T-cell (primary cell): ENCODE measurements at regions of chrX and their contacts with region 1.

Region 1: DNA sequence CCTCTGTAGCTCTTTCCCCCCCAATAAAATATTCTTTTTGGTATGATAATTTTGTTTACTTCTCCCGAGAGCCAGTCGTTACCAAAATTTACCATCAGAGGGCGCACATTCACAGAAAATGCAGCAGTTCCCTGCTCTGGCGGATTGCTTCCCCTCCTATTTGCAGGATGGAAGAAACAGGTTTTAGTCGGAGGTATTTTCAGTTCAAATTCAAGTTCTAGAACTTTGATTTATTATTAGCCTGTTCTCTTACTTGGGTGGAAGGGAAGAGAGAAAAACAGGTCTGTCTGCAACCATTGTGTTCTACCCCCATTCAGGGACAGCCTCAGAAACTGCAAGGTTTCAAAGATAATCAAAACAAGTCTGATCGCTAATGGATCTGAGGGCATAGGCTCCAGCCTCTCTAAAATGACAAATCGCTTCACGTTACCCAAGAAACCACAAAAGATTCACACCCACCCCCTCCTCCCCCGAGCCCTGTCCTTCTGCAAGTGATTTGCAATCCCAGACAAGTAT is 263.8 kb upstream of the RPS6KA3 start:
- DNase-seq: peak; percentile 1 to 68 (median 34)
- ATAC-seq: peak in 3 of 4 experiments; percentile 30 to 55 (median 44)
- H3K4me3 ChIP-seq: no peak overlapping the region
- H3K4me3 Mint-ChIP-seq: no peak overlapping the region
- H3K27ac ChIP-seq: no peak overlapping the region
- H3K27ac Mint-ChIP-seq: no peak overlapping the region
- H3K4me1 ChIP-seq: no peaks in the 10 kb centered on the region
- H3K4me1 Mint-ChIP-seq: peaks cover 5 to 8% (median 5%) of the 10 kb centered on the region in 3 donors
- H3K27me3 ChIP-seq: peaks cover 0 to 4% of the 10 kb centered on the region in 2 experiments
- H3K27me3 Mint-ChIP-seq: peaks cover 16 to 51% of the 10 kb centered on the region in 2 donors

Region 2: DNA sequence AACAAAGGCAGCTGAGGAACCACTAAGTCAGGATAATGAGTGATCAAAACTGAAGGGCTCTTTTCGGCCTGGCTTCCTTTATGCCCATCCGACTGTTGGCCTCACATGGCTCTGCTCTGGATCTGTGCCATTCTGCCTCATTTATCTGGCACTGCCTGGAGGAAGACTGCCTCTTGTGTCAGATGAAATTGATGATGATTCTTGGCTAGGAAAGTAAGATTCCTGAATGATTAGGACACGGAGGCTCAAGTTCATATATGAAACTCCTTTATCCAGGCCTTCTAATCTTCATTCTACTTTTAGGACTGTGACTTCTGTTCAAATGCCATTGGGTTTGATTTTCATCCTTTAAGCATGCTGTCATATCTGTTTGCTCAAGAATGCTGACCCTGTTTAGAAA is 211.6 kb after region 1 on chrX:
- CTCF ChIA-PET with region 1: no interaction called
- POLR2A ChIA-PET with region 1: no interaction called
- DNase-seq: no peak
- ATAC-seq: no peak
- H3K4me3 ChIP-seq: no peak overlapping the region
- H3K4me3 Mint-ChIP-seq: no peak overlapping the region
- H3K27ac ChIP-seq: no peak overlapping the region
- H3K27ac Mint-ChIP-seq: no peak overlapping the region
- H3K4me1 ChIP-seq: no peaks in the 10 kb centered on the region
- H3K4me1 Mint-ChIP-seq: no peaks in the 10 kb centered on the region
- H3K27me3 ChIP-seq: no peaks in the 10 kb centered on the region
- H3K27me3 Mint-ChIP-seq: peaks cover 4 to 6% of the 10 kb centered on the region in 2 donors

Region 3: GRCh38 chrX:21479695-21480270 is 949.3 kb after region 1 on chrX:
- CTCF ChIA-PET with region 1: interaction called, 7 to 22 read pairs
- POLR2A ChIA-PET with region 1: interaction called in 1 of 2 experiments, 3 read pairs
- DNase-seq: peak in 11 of 35 experiments; percentile 0 to 59 (median 1)
- ATAC-seq: peak; percentile 50 to 69 (median 56)
- H3K4me3 ChIP-seq: no peak overlapping the region
- H3K4me3 Mint-ChIP-seq: no peak overlapping the region
- H3K27ac ChIP-seq: no peak overlapping the region
- H3K27ac Mint-ChIP-seq: no peak overlapping the region
- H3K4me1 ChIP-seq: peaks cover 0 to 4% of the 10 kb centered on the region in 2 experiments
- H3K4me1 Mint-ChIP-seq: peaks cover 0 to 6% (median 3%) of the 10 kb centered on the region in 3 donors
- H3K27me3 ChIP-seq: no peaks in the 10 kb centered on the region
- H3K27me3 Mint-ChIP-seq: no peaks in the 10 kb centered on the region

Region 4: GRCh38 chrX:21725496-21725895 is 1195.0 kb after region 1 on chrX:
- CTCF ChIA-PET with region 1: interaction called, 8 to 16 read pairs
- POLR2A ChIA-PET with region 1: no interaction called
- DNase-seq: peak in 3 of 35 experiments; percentile 0 to 39 (median 2)
- ATAC-seq: no peak
- H3K4me3 ChIP-seq: no peak overlapping the region
- H3K4me3 Mint-ChIP-seq: no peak overlapping the region
- H3K27ac ChIP-seq: no peak overlapping the region
- H3K27ac Mint-ChIP-seq: no peak overlapping the region
- H3K4me1 ChIP-seq: no peaks in the 10 kb centered on the region
- H3K4me1 Mint-ChIP-seq: no peaks in the 10 kb centered on the region
- H3K27me3 ChIP-seq: peaks cover 0 to 3% of the 10 kb centered on the region in 2 experiments
- H3K27me3 Mint-ChIP-seq: peaks cover 3 to 31% of the 10 kb centered on the region in 2 donors